Esophagus muscularis mucosa (tissue), 4 donors: ENCODE measurements at regions of chr1 and their contacts with region 1.

Region 1: GRCh38 chr1:64699327-64699726 is 45.5 kb upstream of the RAVER2 start:
- DNase-seq: no peak
- H3K4me3 ChIP-seq: no peak overlapping the region
- H3K27ac ChIP-seq: no peak overlapping the region
- H3K4me1 ChIP-seq: no peaks in the 10 kb centered on the region
- H3K27me3 ChIP-seq: no peaks in the 10 kb centered on the region
- CTCF ChIP-seq: no peak
- EP300 ChIP-seq: no peak
- POLR2A ChIP-seq: no peak

Region 2: DNA sequence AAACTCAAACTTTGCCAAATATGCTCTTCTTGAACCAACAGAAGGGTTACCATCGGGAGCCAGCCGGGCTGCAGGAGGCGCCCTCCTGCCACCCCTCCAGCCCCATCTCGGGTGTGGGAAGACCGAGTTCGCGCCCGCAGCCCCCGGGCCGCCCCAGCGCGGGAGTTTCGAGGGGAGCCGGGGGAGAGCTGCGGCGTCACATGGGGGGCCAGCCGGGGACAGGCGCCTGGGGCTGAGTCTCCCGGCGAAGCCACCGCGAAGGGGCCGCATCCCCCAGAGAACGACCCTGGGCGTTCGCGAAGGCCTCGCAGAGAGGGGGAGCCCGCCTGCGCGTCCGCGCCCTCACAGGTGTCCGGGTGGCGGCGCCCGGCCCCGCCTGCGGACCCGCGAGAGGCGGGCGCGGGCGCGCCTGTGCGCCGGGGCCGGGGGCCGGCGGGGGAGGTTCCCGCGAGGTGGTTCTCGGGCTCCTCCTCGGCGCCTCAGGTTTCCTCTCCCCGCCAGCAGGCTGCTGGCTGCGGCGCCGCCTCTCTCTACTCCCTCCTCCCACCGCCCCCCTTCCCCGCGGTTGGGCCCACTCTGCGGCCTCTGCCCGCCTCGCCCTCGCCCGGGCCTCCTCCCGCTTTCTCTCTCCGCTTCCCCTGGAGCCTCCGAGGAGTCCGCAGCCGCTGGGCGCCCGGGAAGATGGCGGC is 45.3 kb after region 1 on chr1 and contains the start of gene RAVER2:
- intact Hi-C with region 1: loop called (anchors 5 kb)
- DNase-seq: no peak
- H3K4me3 ChIP-seq: peak within 1 kb of the TSS; percentile 79 to 93 (median 86)
- H3K27ac ChIP-seq: peak within 1 kb of the TSS; percentile 87 to 93 (median 88)
- H3K4me1 ChIP-seq: peaks cover 24 to 44% (median 42%) of the 10 kb centered on the region in 4 donors
- H3K27me3 ChIP-seq: no peaks in the 10 kb centered on the region
- CTCF ChIP-seq: peak; percentile 44 to 58 (median 45)
- EP300 ChIP-seq: no peak
- POLR2A ChIP-seq: no peak
- total RNA-seq, gene RAVER2: 17.9 to 30.2 (median 22.4) TPM